PC-9 (cell line): ENCODE measurements at regions of chr10 and their contacts with region 1.

Region 1: DNA sequence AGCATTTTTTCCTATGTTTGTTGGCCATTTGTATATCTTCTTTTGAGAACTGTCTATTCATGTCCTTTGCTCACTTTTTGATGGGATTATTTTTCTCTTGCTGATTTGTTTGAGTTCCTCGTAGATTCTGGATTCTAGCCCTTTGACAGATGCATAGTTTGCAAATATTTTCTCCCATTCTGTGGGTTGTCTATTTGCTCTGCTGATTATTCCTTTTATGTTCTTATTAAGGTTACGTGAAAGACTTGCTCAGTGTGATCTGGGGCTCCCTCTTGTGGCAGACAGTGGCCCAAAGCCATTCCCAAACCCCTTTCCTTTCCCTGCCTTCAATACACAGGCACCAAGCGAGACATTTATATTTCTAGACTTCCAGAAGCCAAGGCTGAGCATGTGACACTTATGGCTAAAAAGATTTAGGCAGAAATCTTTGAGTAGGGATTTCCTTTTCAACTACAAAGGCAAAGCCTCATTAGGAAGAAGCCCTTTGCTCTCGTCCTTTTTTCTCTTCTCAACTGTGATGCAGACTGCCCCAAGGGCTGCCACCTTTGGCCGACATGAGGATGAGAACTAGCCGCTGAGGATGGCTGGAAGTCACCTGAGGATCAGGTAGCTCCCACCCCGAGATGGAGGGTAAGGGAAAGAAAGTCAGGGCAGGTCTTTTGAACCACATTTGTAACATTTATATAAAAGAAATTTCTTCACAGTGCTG is 23.6 kb downstream of the ST8SIA6 start:
- DNase-seq: peak in 1 of 2 experiments; percentile 67
- H3K4me3 ChIP-seq: no peak overlapping the region
- H3K27ac ChIP-seq: no peak overlapping the region
- H3K4me1 ChIP-seq: no peaks in the 10 kb centered on the region
- H3K27me3 ChIP-seq: no peaks in the 10 kb centered on the region
- CTCF ChIP-seq: peak; percentile 84

Region 2: DNA sequence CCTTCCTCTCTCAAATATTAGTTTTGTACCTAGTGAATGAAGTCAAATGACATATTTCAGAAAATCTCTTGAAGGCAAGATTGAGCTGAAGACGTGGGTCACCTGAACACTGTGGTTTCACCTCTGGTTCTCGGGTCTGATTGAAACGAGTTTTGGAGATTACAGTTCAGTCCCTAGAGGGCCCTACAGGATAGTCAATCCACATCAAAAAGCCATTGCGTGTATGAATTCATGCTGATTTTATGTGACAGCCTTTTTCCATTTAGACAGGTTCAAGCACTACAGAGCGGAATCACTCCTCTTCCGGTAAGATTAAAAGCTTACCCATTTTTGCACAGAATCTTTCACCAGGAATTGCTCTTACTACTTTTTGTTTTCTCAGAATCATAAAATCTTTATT is 140.6 kb before region 1 on chr10:
- CTCF ChIA-PET with region 1: no interaction called
- POLR2A ChIA-PET with region 1: no interaction called
- intact Hi-C with region 1: loop called (anchors 1 kb)
- DNase-seq: peak; percentile 10 to 37
- H3K4me3 ChIP-seq: no peak overlapping the region
- H3K27ac ChIP-seq: no peak overlapping the region
- H3K4me1 ChIP-seq: no peaks in the 10 kb centered on the region
- H3K27me3 ChIP-seq: no peaks in the 10 kb centered on the region
- CTCF ChIP-seq: peak; percentile 66

Region 3: GRCh38 chr10:17348501-17349349 is 82.1 kb before region 1 on chr10:
- CTCF ChIA-PET with region 1: no interaction called
- POLR2A ChIA-PET with region 1: no interaction called
- intact Hi-C with region 1: loop called (anchors 5 kb)
- DNase-seq: peak; percentile 83 to 85
- H3K4me3 ChIP-seq: peak overlapping the region; percentile 54
- H3K27ac ChIP-seq: peak overlapping the region; percentile 91
- H3K4me1 ChIP-seq: peaks cover 46% of the 10 kb centered on the region
- H3K27me3 ChIP-seq: no peaks in the 10 kb centered on the region
- CTCF ChIP-seq: no peak

Region 4: DNA sequence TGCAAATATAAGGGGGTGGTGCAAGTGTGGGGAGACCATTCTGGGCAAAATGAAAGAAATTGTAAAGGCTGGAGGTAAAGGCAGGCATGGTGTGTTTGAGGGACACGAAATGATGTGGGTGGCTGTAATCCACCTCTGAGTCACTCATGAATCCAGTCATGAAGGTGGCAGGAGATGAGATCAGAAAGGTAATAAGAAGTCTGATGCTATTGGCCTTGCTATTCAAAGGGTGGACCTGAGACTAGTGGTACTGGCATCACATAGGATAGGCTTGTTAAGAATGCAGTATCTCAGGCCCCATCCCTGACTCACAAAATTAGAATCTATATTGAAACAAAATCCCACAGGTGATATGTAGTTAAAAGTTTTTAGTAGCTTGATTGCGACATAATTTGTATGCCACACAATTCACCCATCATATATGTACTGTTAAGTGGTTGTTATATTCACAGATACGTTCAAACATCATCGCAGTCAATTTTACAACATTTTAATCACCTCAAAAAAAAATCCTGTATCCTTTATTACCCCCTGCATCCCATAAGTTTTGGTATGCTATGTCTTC is 62.0 kb before region 1 on chr10:
- CTCF ChIA-PET with region 1: no interaction called
- POLR2A ChIA-PET with region 1: no interaction called
- intact Hi-C with region 1: no loop called
- DNase-seq: no peak
- H3K4me3 ChIP-seq: no peak overlapping the region
- H3K27ac ChIP-seq: no peak overlapping the region
- H3K4me1 ChIP-seq: no peaks in the 10 kb centered on the region
- H3K27me3 ChIP-seq: no peaks in the 10 kb centered on the region
- CTCF ChIP-seq: no peak

Region 5: DNA sequence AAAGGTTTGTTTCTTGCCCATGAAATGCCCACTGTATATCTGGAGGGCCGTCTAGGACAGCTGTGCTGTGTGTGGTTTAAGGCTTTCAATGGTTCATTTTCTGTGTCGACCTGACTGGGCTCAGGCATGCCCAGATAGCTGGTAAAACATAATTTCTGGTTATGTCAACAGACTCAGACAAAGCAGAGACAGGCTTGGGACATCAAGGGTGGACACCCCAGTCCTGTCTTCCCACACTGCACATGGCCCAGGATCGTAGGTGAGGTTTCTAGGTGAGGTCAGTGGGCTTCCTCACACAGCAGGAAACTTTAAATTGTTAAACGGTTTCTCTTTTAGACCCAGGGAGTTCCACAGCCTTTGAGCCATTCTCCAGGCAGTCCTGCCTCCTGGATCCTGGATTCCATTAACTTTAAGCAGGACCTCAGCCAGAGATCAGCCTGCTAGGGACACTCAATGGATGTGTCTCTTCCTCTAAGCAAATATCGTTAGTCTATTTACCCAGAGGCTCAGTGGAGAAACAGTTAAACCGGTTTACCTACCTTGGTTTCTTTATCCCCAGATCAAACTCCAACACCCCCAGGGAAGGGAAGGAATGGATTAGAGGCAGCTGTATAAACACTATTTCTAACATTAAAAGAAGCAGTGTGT is 42.8 kb before region 1 on chr10:
- CTCF ChIA-PET with region 1: no interaction called
- POLR2A ChIA-PET with region 1: no interaction called
- intact Hi-C with region 1: no loop called
- DNase-seq: peak; percentile 48 to 88
- H3K4me3 ChIP-seq: peak overlapping the region; percentile 23; the same call in 1 of the 2 replicates
- H3K27ac ChIP-seq: peak overlapping the region; percentile 56
- H3K4me1 ChIP-seq: peaks cover 23% of the 10 kb centered on the region
- H3K27me3 ChIP-seq: no peaks in the 10 kb centered on the region
- CTCF ChIP-seq: no peak

Region 6: GRCh38 chr10:17599089-17599488 is 168.3 kb after region 1 on chr10:
- CTCF ChIA-PET with region 1: no interaction called
- POLR2A ChIA-PET with region 1: no interaction called
- intact Hi-C with region 1: loop called (anchors 2 kb)
- DNase-seq: peak in 1 of 2 experiments; percentile 10
- H3K4me3 ChIP-seq: no peak overlapping the region
- H3K27ac ChIP-seq: no peak overlapping the region
- H3K4me1 ChIP-seq: no peaks in the 10 kb centered on the region
- H3K27me3 ChIP-seq: no peaks in the 10 kb centered on the region
- CTCF ChIP-seq: 0 out of 2 replicates have a peak, but pooled peaks have one; percentile 32

Region 7: GRCh38 chr10:18238870-18239485 is 808.2 kb after region 1 on chr10:
- CTCF ChIA-PET with region 1: no interaction called
- POLR2A ChIA-PET with region 1: no interaction called
- intact Hi-C with region 1: loop called (anchors 10 kb)
- DNase-seq: peak in 1 of 2 experiments; percentile 1
- H3K4me3 ChIP-seq: no peak overlapping the region
- H3K27ac ChIP-seq: no peak overlapping the region
- H3K4me1 ChIP-seq: no peaks in the 10 kb centered on the region
- H3K27me3 ChIP-seq: no peaks in the 10 kb centered on the region
- CTCF ChIP-seq: peak; percentile 55; the same call in 1 of the 2 replicates